ENCODE measurements at regions of chr9 and their contacts with region 1.

Region 1: GRCh38 chr9:34899535-34900158 is 58.4 kb upstream of the PHF24 start:
- DNase-seq: peak; percentile 62 to 84 (median 64)
- H3K4me3 ChIP-seq: no peak overlapping the region
- H3K4me3 Mint-ChIP-seq: no peak overlapping the region
- H3K27ac ChIP-seq: no peak overlapping the region
- H3K27ac Mint-ChIP-seq: no peak overlapping the region
- H3K4me1 ChIP-seq: no peaks in the 10 kb centered on the region
- H3K4me1 Mint-ChIP-seq: no peaks in the 10 kb centered on the region
- H3K27me3 ChIP-seq: no peaks in the 10 kb centered on the region
- H3K27me3 Mint-ChIP-seq: peaks cover 13 to 44% of the 10 kb centered on the region in 2 donors

Region 2: DNA sequence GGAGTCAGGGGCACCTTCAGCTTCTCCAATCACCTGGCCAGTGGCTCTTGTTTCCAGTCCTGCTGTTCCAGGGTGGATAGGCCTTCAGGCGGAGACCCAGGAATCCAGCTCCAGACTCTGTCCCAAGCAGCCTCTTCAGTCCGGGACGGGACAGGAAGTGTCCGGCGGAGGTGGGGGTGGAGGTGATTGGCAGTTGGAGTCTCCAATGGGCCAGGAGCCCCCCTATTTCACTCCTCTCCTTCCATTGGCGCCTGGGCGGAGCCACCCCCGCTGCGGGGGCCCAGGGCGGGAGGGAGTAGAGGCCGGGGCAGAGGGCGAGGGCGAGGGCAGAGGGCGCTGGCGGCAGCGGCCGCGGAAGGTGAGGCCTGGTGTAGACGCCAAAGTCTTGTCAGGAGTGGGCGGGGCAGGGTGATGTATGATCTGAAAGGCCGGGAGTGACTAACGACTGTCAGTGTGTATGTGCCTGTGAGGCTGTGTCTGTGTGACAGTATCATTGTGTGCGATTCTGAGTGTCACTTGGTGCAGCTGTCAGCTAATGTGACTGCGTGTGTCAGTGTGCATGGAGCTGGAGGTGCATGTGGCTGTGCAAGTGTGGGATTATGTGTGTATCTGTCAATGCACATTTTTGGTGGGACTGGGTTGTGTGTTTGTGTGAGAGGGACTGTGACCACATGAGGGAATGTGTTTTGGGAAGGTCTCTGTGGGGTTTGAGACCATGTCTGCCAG is 247.6 kb before region 1 on chr9 and contains the start of gene IL11RA:
- CTCF ChIA-PET with region 1: no interaction called
- POLR2A ChIA-PET with region 1: no interaction called
- DNase-seq: no peak
- H3K4me3 ChIP-seq: no peak within 1 kb of the TSS
- H3K4me3 Mint-ChIP-seq: peak within 1 kb of the TSS in 2 of 7 donors; percentile 3 to 58
- H3K27ac ChIP-seq: peak within 1 kb of the TSS; percentile 40
- H3K27ac Mint-ChIP-seq: peak within 1 kb of the TSS; percentile 0 to 89 (median 62)
- H3K4me1 ChIP-seq: peaks cover 32% of the 10 kb centered on the region
- H3K4me1 Mint-ChIP-seq: peaks cover 36 to 55% (median 41%) of the 10 kb centered on the region in 3 donors
- H3K27me3 ChIP-seq: no peaks in the 10 kb centered on the region
- H3K27me3 Mint-ChIP-seq: peaks cover 0 to 3% of the 10 kb centered on the region in 2 donors
- total RNA-seq, gene IL11RA: 15.6 to 16.5 TPM

Region 3: DNA sequence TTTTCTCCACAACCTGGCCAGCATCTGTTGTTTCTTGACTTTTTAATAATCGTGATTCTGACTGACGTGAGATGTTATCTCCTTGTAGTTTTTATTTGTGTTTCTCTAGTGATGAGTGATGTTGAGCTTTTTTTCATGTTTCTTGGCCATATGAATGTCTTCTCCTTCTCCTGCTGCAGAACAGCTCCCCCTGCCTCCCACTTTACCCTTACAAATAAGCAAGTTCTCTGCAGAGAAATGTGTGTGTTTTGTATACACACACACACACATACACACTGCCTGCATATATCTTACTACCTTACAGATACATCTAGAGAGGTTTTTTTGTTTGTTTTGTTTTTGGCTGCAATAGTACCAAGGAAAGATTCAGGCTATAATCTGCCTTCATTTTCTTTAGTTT is 30.3 kb before region 1 on chr9:
- CTCF ChIA-PET with region 1: no interaction called
- POLR2A ChIA-PET with region 1: no interaction called
- DNase-seq: no peak
- H3K4me3 ChIP-seq: no peak overlapping the region
- H3K4me3 Mint-ChIP-seq: no peak overlapping the region
- H3K27ac ChIP-seq: no peak overlapping the region
- H3K27ac Mint-ChIP-seq: no peak overlapping the region
- H3K4me1 ChIP-seq: no peaks in the 10 kb centered on the region
- H3K4me1 Mint-ChIP-seq: no peaks in the 10 kb centered on the region
- H3K27me3 ChIP-seq: no peaks in the 10 kb centered on the region
- H3K27me3 Mint-ChIP-seq: peaks cover 8 to 46% of the 10 kb centered on the region in 2 donors

Region 4: GRCh38 chr9:34985311-34985899 is 85.8 kb after region 1 on chr9:
- CTCF ChIA-PET with region 1: interaction called, 21 read pairs
- POLR2A ChIA-PET with region 1: no interaction called
- DNase-seq: peak; percentile 36 to 71 (median 51)
- H3K4me3 ChIP-seq: no peak overlapping the region
- H3K4me3 Mint-ChIP-seq: peak overlapping the region in 1 of 7 donors; percentile 27
- H3K27ac ChIP-seq: no peak overlapping the region
- H3K27ac Mint-ChIP-seq: peak overlapping the region in 6 of 8 donors; percentile 15 to 82 (median 54)
- H3K4me1 ChIP-seq: peaks cover 68% of the 10 kb centered on the region
- H3K4me1 Mint-ChIP-seq: peaks cover 46 to 76% (median 66%) of the 10 kb centered on the region in 3 donors
- H3K27me3 ChIP-seq: no peaks in the 10 kb centered on the region
- H3K27me3 Mint-ChIP-seq: no peaks in the 10 kb centered on the region

Region 5: GRCh38 chr9:35051069-35051967 is 151.7 kb after region 1 on chr9:
- CTCF ChIA-PET with region 1: interaction called, 14 read pairs
- POLR2A ChIA-PET with region 1: no interaction called
- DNase-seq: peak in 3 of 5 donors; percentile 15 to 33 (median 27)
- H3K4me3 ChIP-seq: no peak overlapping the region
- H3K4me3 Mint-ChIP-seq: no peak overlapping the region
- H3K27ac ChIP-seq: no peak overlapping the region
- H3K27ac Mint-ChIP-seq: peak overlapping the region in 3 of 8 donors; percentile 47 to 84 (median 64)
- H3K4me1 ChIP-seq: no peaks in the 10 kb centered on the region
- H3K4me1 Mint-ChIP-seq: peaks cover 4 to 18% (median 5%) of the 10 kb centered on the region in 3 donors
- H3K27me3 ChIP-seq: no peaks in the 10 kb centered on the region
- H3K27me3 Mint-ChIP-seq: no peaks in the 10 kb centered on the region

Region 6: GRCh38 chr9:35476596-35476995 is 576.9 kb after region 1 on chr9:
- CTCF ChIA-PET with region 1: interaction called, 10 read pairs
- POLR2A ChIA-PET with region 1: no interaction called
- DNase-seq: no peak
- H3K4me3 ChIP-seq: no peak overlapping the region
- H3K4me3 Mint-ChIP-seq: no peak overlapping the region
- H3K27ac ChIP-seq: no peak overlapping the region
- H3K27ac Mint-ChIP-seq: no peak overlapping the region
- H3K4me1 ChIP-seq: no peaks in the 10 kb centered on the region
- H3K4me1 Mint-ChIP-seq: no peaks in the 10 kb centered on the region
- H3K27me3 ChIP-seq: peaks cover 4% of the 10 kb centered on the region
- H3K27me3 Mint-ChIP-seq: peaks cover 5 to 31% of the 10 kb centered on the region in 2 donors